Right ventricle myocardium inferior (tissue), 1 donor: ENCODE measurements at regions of chr11 and their contacts with region 1.

Region 1: DNA sequence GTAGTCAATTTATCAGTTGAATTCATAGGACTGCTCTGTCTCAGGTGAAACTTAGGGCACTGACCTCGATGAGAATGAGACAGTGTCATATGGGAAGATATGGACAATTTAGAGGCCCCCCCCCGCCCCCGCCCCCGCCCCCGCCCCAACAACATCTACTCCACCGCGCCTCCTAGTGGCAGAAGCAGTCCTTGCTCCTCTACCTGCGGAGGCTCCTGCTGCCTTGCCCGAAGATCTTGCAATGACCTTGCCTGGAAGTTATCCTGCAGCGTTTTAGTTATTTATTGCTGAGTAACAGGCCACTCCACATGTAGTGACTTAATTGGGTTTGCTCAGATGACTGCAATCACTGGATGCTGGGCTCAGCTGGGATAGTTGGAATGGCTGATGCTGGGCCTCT is 15.2 kb downstream of the SERPINH1 start:
- DNase-seq: no peak
- ATAC-seq: no peak

Region 2: GRCh38 chr11:75532200-75533048 is 44.8 kb before region 1 on chr11:
- intact Hi-C with region 1: no loop called
- DNase-seq: peak; percentile 72
- ATAC-seq: peak; percentile 45

Region 3: GRCh38 chr11:75547580-75548058 is 29.6 kb before region 1 on chr11:
- intact Hi-C with region 1: loop called (anchors 1 kb)
- DNase-seq: peak; percentile 79
- ATAC-seq: peak; percentile 88